ENCODE measurements at regions of chr1 and their contacts with region 1.

Region 1: GRCh38 chr1:151222130-151222529 is 23.8 kb downstream of the PIP5K1A start:
- DNase-seq: no peak
- H3K4me3 ChIP-seq: no peak overlapping the region
- H3K4me3 Mint-ChIP-seq: no peak overlapping the region
- H3K27ac ChIP-seq: peak overlapping the region in 1 of 2 donors; percentile 15
- H3K27ac Mint-ChIP-seq: peak overlapping the region in 1 of 7 donors; percentile 17
- H3K4me1 ChIP-seq: no peaks in the 10 kb centered on the region
- H3K4me1 Mint-ChIP-seq: no peaks in the 10 kb centered on the region
- H3K27me3 ChIP-seq: no peaks in the 10 kb centered on the region
- H3K27me3 Mint-ChIP-seq: peaks cover 0 to 2% (median 0%) of the 10 kb centered on the region in 3 donors
- CTCF ChIP-seq: no peak

Region 2: DNA sequence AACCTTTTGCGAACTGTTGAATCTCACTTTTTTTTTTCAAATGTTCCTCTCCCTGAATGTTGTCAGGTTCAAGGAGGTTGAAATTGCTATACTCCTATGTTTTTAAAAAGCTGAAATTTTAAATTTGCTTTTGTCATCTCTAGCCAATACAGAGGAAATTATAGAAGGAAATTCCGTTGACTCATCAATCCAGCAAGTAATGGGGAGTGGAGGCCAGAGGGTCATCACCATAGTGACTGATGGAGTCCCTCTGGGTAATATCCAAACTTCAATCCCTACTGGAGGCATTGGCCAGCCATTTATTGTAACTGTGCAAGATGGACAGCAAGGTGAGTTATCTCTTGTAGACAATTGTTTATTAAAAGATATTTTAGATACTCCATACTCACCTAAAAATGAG is 115.2 kb before region 1 on chr1:
- intact Hi-C with region 1: loop called in 1 of 2 experiments (anchors 10 kb)
- DNase-seq: peak in 1 of 3 donors; percentile 6
- H3K4me3 ChIP-seq: no peak overlapping the region
- H3K4me3 Mint-ChIP-seq: no peak overlapping the region
- H3K27ac ChIP-seq: no peak overlapping the region
- H3K27ac Mint-ChIP-seq: no peak overlapping the region
- H3K4me1 ChIP-seq: no peaks in the 10 kb centered on the region
- H3K4me1 Mint-ChIP-seq: no peaks in the 10 kb centered on the region
- H3K27me3 ChIP-seq: no peaks in the 10 kb centered on the region
- H3K27me3 Mint-ChIP-seq: peaks cover 0 to 3% (median 0%) of the 10 kb centered on the region in 3 donors
- CTCF ChIP-seq: no peak